CD8-positive, alpha-beta T cell (primary cell): ENCODE measurements at regions of chr2 and their contacts with region 1.

Region 1: DNA sequence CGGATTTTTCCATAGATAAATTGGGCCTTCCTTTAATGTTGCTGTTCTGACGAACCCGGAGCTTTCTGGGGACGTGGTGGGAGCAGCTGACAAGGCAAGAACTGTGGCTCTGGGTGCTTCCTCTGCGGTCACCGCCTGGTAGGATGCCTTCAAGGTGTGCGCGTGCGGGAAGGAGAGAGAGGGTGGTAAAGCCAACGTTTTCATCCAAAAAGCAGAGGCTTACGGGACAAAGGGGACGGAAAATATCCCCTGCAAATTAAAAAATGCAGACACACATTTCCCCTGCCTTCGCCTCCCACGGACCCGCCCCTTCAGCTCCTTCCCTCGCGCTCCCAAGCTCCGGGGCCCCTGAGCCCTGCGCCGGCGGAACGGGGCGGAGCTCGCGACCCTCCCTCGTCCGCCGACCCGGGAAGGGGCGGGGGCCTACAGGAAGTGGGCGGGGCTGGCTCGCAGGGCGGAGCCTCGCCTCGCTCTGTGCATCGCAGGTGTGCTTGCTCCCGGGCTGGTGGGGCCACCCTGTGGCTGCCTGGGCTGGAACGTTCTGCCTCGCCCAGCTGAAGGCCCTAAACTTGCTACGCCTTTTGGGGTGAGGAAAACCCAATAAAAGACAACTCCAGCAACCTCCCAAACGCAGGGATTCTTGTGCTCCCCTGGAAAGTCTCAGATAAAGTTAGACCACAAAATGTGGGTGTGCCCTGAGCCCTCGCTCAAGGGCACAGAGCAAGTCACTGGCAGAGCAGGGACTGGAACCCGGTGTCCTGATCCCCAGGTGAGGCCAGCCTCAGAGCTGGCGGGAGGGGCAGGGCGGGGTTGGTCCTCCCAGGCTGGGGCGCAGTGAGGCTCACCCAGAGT is 25.4 kb upstream of the SLC66A3 start:
- DNase-seq: peak; percentile 53 to 90 (median 81)
- ATAC-seq: peak; percentile 90
- H3K4me3 ChIP-seq: peak overlapping the region; percentile 42 to 49
- H3K4me3 Mint-ChIP-seq: peak overlapping the region; percentile 80
- H3K27ac ChIP-seq: peak overlapping the region in 1 of 2 experiments; percentile 61
- H3K27ac Mint-ChIP-seq: peak overlapping the region; percentile 88
- H3K4me1 ChIP-seq: peaks cover 23% of the 10 kb centered on the region
- H3K4me1 Mint-ChIP-seq: peaks cover 29% of the 10 kb centered on the region
- H3K27me3 ChIP-seq: no peaks in the 10 kb centered on the region
- H3K27me3 Mint-ChIP-seq: no peaks in the 10 kb centered on the region
- CTCF ChIP-seq: peak; percentile 36

Region 2: DNA sequence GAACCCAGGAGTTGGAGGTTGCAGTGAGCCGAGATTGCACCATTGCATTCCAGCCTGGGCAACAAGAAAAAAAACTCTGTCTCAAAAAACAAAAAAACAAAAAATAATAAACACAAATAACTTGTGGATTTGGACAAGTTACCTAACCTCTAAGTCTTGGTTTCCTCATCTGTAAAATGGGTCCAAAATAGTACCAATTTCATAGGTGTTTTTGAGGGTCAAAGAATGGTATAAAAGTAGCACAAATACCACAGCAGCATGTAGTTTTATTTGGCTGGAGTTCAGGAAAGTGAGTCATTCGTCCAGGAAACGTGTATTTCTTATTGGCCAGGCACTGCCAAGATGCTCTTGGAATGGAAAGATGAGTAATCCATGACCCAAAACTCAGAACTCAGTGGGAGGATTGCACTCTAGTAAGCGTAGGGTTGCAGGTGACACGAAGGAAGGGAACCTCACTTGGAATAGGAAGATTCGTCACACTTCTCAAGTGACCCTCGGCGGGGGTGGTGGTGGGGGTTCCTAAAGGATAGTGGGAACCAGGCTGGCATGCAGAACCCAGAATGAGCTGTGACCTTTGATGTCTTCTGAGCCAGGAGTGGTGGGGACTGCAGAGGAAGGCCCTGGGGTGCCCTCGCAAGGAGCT is 1153.9 kb before region 1 on chr2:
- CTCF ChIA-PET with region 1: no interaction called
- POLR2A ChIA-PET with region 1: no interaction called
- intact Hi-C with region 1: no loop called
- DNase-seq: no peak
- ATAC-seq: no peak
- H3K4me3 ChIP-seq: no peak overlapping the region
- H3K4me3 Mint-ChIP-seq: no peak overlapping the region
- H3K27ac ChIP-seq: no peak overlapping the region
- H3K27ac Mint-ChIP-seq: no peak overlapping the region
- H3K4me1 ChIP-seq: peaks cover 9% of the 10 kb centered on the region
- H3K4me1 Mint-ChIP-seq: peaks cover 7% of the 10 kb centered on the region
- H3K27me3 ChIP-seq: peaks cover 0 to 3% of the 10 kb centered on the region in 2 experiments
- H3K27me3 Mint-ChIP-seq: peaks cover 11% of the 10 kb centered on the region
- CTCF ChIP-seq: no peak

Region 3: DNA sequence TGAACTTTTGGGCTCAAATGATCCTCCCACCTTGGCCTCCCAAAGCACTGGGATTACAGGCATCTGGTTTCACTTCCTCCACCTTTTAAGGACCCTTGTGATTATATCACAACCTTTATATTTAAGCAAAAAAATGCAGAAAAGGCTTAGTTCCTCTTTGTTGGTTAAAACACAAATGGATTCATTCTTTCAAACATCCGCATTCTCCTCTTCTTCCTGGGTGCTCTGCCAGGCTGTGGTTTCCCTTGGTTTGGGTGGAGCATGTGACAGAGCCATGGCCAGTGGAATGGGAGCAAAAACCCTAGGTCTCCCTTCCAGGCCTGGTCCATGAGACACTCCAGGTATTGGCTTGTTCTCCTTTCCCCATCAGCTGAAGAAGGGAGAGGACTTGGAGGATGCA is 15.5 kb after region 1 on chr2:
- CTCF ChIA-PET with region 1: interaction called, 23 read pairs
- POLR2A ChIA-PET with region 1: interaction called, 4 read pairs
- intact Hi-C with region 1: no loop called
- DNase-seq: no peak
- ATAC-seq: no peak
- H3K4me3 ChIP-seq: no peak overlapping the region
- H3K4me3 Mint-ChIP-seq: no peak overlapping the region
- H3K27ac ChIP-seq: no peak overlapping the region
- H3K27ac Mint-ChIP-seq: no peak overlapping the region
- H3K4me1 ChIP-seq: no peaks in the 10 kb centered on the region
- H3K4me1 Mint-ChIP-seq: no peaks in the 10 kb centered on the region
- H3K27me3 ChIP-seq: no peaks in the 10 kb centered on the region
- H3K27me3 Mint-ChIP-seq: peaks cover 9% of the 10 kb centered on the region
- CTCF ChIP-seq: no peak

Region 4: DNA sequence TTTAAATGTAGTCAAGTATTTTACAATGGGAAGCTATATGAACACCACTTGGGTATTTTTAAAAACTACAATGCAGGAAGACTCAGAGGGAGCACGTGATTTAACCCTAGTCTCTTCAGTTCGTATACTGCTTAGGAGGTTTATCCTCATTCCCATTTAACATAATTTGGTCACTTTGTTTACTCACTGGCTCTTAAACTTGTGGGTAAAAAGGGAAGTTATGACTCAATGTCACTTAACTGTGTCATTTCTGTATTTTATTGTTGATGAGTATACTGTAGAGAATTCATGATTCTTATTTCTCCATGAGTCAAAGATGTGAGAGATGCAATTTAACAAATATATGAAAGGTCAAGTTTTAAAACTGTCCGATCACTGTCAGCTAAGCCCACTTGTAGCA is 73.7 kb after region 1 on chr2:
- CTCF ChIA-PET with region 1: interaction called, 3 read pairs
- POLR2A ChIA-PET with region 1: no interaction called
- intact Hi-C with region 1: loop called (anchors 5 to 10 kb)
- DNase-seq: peak in 1 of 9 experiments; percentile 7
- ATAC-seq: no peak
- H3K4me3 ChIP-seq: no peak overlapping the region
- H3K4me3 Mint-ChIP-seq: no peak overlapping the region
- H3K27ac ChIP-seq: no peak overlapping the region
- H3K27ac Mint-ChIP-seq: no peak overlapping the region
- H3K4me1 ChIP-seq: no peaks in the 10 kb centered on the region
- H3K4me1 Mint-ChIP-seq: peaks cover 2% of the 10 kb centered on the region
- H3K27me3 ChIP-seq: no peaks in the 10 kb centered on the region
- H3K27me3 Mint-ChIP-seq: no peaks in the 10 kb centered on the region
- CTCF ChIP-seq: no peak

Region 5: DNA sequence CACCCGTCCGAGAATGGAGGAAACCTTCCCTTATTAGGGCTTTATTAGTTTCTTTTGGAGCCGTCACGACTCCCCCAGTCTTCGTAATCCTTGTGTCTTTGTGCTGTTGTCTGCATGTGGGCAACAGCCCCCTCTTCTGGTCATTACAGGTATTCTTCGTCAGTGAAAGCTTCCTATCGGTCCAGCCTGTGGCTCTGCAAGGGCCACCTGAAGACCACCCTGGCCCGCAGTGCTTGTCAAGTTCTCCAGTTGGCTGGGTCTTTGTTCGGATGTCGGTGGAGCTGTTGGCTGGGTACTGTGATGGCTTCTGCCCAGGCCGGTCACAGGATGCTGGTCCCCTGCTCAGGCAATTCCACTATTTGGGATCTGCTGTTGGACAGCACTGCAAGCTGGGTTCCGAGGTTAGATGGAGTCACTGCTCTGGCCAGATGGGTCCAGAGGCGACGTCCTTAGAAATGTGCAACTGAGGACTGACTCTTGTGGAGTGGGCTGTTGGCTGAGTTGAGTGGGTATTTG is 317.0 kb after region 1 on chr2:
- CTCF ChIA-PET with region 1: interaction called, 40 read pairs
- POLR2A ChIA-PET with region 1: interaction called, 4 read pairs
- intact Hi-C with region 1: loop called (anchors 1 kb)
- DNase-seq: peak; percentile 10 to 72 (median 50)
- ATAC-seq: peak; percentile 73
- H3K4me3 ChIP-seq: no peak overlapping the region
- H3K4me3 Mint-ChIP-seq: no peak overlapping the region
- H3K27ac ChIP-seq: no peak overlapping the region
- H3K27ac Mint-ChIP-seq: no peak overlapping the region
- H3K4me1 ChIP-seq: no peaks in the 10 kb centered on the region
- H3K4me1 Mint-ChIP-seq: no peaks in the 10 kb centered on the region
- H3K27me3 ChIP-seq: no peaks in the 10 kb centered on the region
- H3K27me3 Mint-ChIP-seq: no peaks in the 10 kb centered on the region
- CTCF ChIP-seq: peak; percentile 75

Region 6: GRCh38 chr2:11681722-11682589 is 552.1 kb after region 1 on chr2:
- CTCF ChIA-PET with region 1: no interaction called
- POLR2A ChIA-PET with region 1: no interaction called
- intact Hi-C with region 1: loop called in 1 of 2 experiments (anchors 5 kb)
- DNase-seq: peak in 8 of 9 experiments; percentile 9 to 58 (median 44)
- ATAC-seq: peak; percentile 59
- H3K4me3 ChIP-seq: no peak overlapping the region
- H3K4me3 Mint-ChIP-seq: no peak overlapping the region
- H3K27ac ChIP-seq: no peak overlapping the region
- H3K27ac Mint-ChIP-seq: no peak overlapping the region
- H3K4me1 ChIP-seq: no peaks in the 10 kb centered on the region
- H3K4me1 Mint-ChIP-seq: peaks cover 5% of the 10 kb centered on the region
- H3K27me3 ChIP-seq: no peaks in the 10 kb centered on the region
- H3K27me3 Mint-ChIP-seq: peaks cover 10% of the 10 kb centered on the region
- CTCF ChIP-seq: peak; percentile 63